Activated CD4-positive, alpha-beta T cell treated with anti-CD3 and anti-CD28 coated beads, Interleukin-2, amount 10 ng/mL, durations not matched to agents 24 days and 14 days (primary cell): ENCODE measurements at regions of chr18 and their contacts with region 1.

Region 1: GRCh38 chr18:79405781-79406575 is 10.2 kb downstream of the NFATC1 start:
- DNase-seq: peak; percentile 96
- H3K4me3 Mint-ChIP-seq: peak overlapping the region; percentile 83
- H3K27ac Mint-ChIP-seq: peak overlapping the region; percentile 96
- H3K4me1 Mint-ChIP-seq: peaks cover 47% of the 10 kb centered on the region
- H3K27me3 Mint-ChIP-seq: no peaks in the 10 kb centered on the region

Region 2: DNA sequence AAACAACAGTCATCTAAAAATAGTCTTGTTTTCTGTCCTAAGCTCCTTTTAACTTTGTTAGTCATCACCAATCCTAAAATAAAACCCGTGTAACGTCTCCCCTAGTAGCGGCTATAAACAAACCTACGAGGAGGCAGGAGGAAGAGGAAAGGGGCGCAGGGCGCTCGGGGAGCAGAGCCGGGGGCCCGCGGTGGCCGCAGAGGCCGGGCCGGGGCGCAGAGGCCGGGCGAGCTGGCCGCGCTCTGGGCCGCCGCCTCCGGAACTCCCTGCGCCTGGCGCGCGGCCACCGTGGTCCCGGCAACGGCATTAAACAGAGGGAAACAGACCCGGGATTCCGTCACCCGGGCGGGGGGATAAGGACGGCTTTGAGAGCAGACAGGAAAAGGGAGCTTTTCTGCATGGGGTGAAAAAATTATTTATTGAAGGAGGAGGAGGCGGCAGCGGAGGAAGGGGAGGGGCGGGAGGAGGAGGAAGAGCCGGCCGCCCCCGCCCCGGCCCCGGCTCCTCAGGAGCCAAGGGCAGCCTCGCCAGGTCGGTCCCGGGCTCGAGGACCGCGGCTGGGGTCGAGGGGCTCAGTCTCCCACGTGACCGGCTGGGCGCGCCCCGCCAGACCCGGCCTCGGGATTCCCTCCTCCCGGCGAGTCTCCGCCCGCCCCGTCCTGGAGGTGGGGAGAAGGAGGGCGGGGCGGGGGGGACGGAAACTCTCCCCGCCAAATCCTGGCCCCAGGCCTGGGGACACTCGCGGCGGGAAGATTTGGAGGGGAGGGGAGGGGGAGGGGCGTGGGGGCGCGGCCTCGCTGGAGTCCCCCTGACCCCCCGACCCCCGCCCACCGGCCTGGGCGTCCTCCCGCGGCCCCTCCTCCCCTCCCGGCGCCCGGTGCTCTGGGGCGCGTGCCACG is 12.1 kb before region 1 on chr18:
- intact Hi-C with region 1: loop called (anchors 1 kb)
- DNase-seq: peak; percentile 83
- H3K4me3 Mint-ChIP-seq: peak overlapping the region; percentile 87
- H3K27ac Mint-ChIP-seq: peak overlapping the region; percentile 92
- H3K4me1 Mint-ChIP-seq: peaks cover 19% of the 10 kb centered on the region
- H3K27me3 Mint-ChIP-seq: peaks cover 27% of the 10 kb centered on the region

Region 3: GRCh38 chr18:79439201-79440023 is 33.4 kb after region 1 on chr18:
- intact Hi-C with region 1: loop called (anchors 2 kb)
- DNase-seq: peak; percentile 74
- H3K4me3 Mint-ChIP-seq: no peak overlapping the region
- H3K27ac Mint-ChIP-seq: peak overlapping the region; percentile 47
- H3K4me1 Mint-ChIP-seq: peaks cover 21% of the 10 kb centered on the region
- H3K27me3 Mint-ChIP-seq: no peaks in the 10 kb centered on the region

Region 4: DNA sequence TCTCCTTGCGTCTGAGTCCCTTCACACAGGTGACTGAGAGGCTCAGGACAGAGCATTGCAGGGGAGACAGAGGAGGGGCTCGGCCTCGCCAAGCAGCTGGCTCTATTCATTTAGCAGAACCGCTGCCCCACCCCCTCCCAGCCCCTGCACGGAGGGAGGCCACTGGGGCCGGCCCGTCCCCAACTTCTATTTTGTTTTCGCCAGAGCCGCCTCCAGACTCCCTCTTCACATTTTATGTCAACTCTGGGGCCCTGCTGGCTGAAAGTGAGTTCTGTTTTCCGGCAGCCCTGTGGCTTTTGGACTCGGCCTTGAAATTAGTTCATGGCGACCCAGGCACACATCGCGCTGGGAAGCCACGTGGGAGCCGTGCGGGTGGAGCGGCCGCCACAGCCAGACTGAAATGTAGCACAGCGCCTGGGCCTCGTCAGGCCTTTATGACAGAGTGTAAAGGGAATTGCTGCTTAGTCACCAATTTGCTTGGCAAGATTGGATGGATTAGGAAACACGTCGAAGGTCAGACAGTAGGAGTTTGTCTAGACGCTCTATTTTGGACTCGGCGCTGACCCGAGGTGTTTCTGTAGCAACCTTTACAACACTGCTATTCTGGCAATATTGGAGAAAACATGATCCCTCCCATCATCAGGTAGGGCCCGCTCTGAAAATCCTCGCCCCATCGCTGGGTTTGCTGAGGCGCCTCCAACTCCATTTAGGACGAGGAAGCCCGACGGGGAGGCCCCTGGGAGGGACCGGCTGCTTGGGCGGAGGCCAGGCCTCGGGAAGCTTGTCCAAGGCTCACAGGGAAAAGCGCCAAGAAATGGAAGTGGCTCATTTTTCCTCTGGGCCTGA is 182.9 kb after region 1 on chr18:
- intact Hi-C with region 1: no loop called
- DNase-seq: no peak
- H3K4me3 Mint-ChIP-seq: no peak overlapping the region
- H3K27ac Mint-ChIP-seq: no peak overlapping the region
- H3K4me1 Mint-ChIP-seq: no peaks in the 10 kb centered on the region
- H3K27me3 Mint-ChIP-seq: peaks cover 17% of the 10 kb centered on the region

Region 5: GRCh38 chr18:79720355-79720733 is 314.4 kb after region 1 on chr18:
- intact Hi-C with region 1: no loop called
- DNase-seq: peak; percentile 60
- H3K4me3 Mint-ChIP-seq: no peak overlapping the region
- H3K27ac Mint-ChIP-seq: no peak overlapping the region
- H3K4me1 Mint-ChIP-seq: peaks cover 9% of the 10 kb centered on the region
- H3K27me3 Mint-ChIP-seq: no peaks in the 10 kb centered on the region

Region 6: DNA sequence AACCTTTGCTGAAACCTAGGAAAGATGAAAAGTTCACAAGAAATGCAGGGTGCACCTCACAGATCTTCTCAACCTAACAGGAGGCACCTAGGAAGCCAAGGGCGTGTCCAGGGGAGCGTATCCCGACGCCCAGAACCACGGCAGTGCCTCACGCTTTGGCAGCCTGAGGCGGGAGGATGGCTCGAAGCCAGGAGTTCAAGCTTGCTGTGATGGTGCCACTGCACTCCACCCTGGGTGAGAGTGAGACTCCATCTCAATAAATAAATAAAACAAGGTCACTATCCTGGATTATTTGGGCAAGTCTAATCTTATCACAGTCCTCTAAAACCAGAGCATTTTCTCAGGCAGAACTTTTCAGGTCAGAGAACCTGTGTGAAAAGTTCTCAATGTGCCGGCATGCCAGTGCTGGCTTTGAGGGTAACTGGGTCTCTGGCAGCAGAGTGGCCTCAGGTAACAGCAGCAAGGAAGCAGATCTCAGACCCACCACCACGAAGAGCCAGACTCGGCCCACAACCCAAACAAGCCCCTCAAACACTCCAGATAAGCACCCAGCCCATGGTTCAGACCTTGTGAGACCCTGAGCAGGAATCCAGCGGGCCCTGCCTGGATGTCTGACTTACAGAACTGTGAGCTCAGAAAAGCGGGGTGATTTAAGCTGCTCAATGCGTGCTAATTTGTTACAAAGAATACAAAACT is 570.2 kb after region 1 on chr18:
- intact Hi-C with region 1: no loop called
- DNase-seq: no peak
- H3K4me3 Mint-ChIP-seq: no peak overlapping the region
- H3K27ac Mint-ChIP-seq: no peak overlapping the region
- H3K4me1 Mint-ChIP-seq: peaks cover 16% of the 10 kb centered on the region
- H3K27me3 Mint-ChIP-seq: no peaks in the 10 kb centered on the region